ENCODE measurements at regions of chr3 and their contacts with region 1.

Region 1: GRCh38 chr3:10149226-10149625 is 7.6 kb downstream of the VHL start:
- DNase-seq: no peak
- H3K4me3 ChIP-seq: no peak overlapping the region
- H3K27ac ChIP-seq: no peak overlapping the region
- H3K27me3 ChIP-seq: no peaks in the 10 kb centered on the region
- CTCF ChIP-seq: no peak

Region 2: GRCh38 chr3:10164546-10165393 is 15.5 kb after region 1 on chr3 and contains the start of gene IRAK2:
- CTCF ChIA-PET with region 1: interaction called, 11 read pairs
- POLR2A ChIA-PET with region 1: interaction called, 9 read pairs
- DNase-seq: no peak
- H3K4me3 ChIP-seq: peak within 1 kb of the TSS; percentile 90
- H3K27ac ChIP-seq: no peak within 1 kb of the TSS
- H3K27me3 ChIP-seq: no peaks in the 10 kb centered on the region
- CTCF ChIP-seq: peak; percentile 61
- polyA plus RNA-seq, gene IRAK2: 7.6 and 8.9 TPM in 2 replicates

Region 3: GRCh38 chr3:10310578-10310977 is 161.4 kb after region 1 on chr3:
- CTCF ChIA-PET with region 1: no interaction called
- POLR2A ChIA-PET with region 1: no interaction called
- DNase-seq: peak; percentile 61
- H3K4me3 ChIP-seq: no peak overlapping the region
- H3K27ac ChIP-seq: no peak overlapping the region
- H3K27me3 ChIP-seq: no peaks in the 10 kb centered on the region
- CTCF ChIP-seq: no peak